GM12878 (cell line): ENCODE measurements at regions of chr6 and their contacts with region 1.

Region 1: DNA sequence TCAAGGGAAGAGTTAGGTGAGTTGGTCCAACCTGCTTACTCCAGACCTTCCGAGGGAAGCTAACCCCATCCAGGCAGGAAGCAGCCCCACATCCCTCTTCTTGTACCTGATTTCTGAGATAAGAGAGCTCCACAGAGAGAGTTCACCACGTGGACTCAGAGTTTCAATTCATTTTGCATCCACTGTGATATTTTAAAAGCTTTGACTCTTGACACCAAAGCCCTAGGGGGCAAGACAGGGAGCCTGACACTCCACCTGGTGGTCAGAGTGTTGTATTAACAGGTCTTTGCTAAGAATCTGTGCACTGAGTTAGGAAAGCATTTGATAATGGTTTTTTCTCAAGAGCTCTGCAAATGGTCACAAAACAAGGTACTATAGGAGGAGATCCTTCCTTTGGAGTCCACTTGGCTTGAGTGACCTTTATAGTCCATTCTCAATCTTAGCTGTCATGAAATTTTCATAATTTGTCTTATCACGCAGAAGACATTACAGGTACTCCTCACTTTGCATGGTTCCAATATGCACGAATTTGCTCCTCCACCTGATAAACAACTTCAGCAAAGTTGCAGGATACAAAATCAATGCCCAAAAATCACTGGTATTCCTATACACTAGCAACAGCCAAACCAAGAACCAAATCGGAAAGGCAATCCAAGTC is 56.2 kb upstream of the RIPOR2 start:
- DNase-seq: peak; percentile 54
- ATAC-seq: peak; percentile 98
- H3K4me3 ChIP-seq: no peak overlapping the region
- H3K27ac ChIP-seq: no peak overlapping the region
- H3K4me1 ChIP-seq: peaks cover 6% of the 10 kb centered on the region
- H3K27me3 ChIP-seq: no peaks in the 10 kb centered on the region
- CTCF ChIP-seq: peak; percentile 77 to 81 (median 79)
- EP300 ChIP-seq: no peak
- POLR2A ChIP-seq: no peak
- RAD21 ChIP-seq: peak; percentile 99

Region 2: GRCh38 chr6:24855395-24856245 is 136.3 kb before region 1 on chr6:
- CTCF ChIA-PET with region 1: interaction called, 230 read pairs
- POLR2A ChIA-PET with region 1: interaction called, 7 read pairs
- RAD21 ChIA-PET with region 1: interaction called, 160 read pairs
- SMC1A ChIA-PET with region 1: interaction called, 243 read pairs
- in situ Hi-C with region 1: no loop called
- intact Hi-C with region 1: loop called (anchors 1 kb)
- DNase-seq: peak; percentile 58
- ATAC-seq: peak; percentile 85
- H3K4me3 ChIP-seq: no peak overlapping the region
- H3K27ac ChIP-seq: no peak overlapping the region
- H3K4me1 ChIP-seq: peaks cover 32% of the 10 kb centered on the region
- H3K27me3 ChIP-seq: no peaks in the 10 kb centered on the region
- CTCF ChIP-seq: peak; percentile 78 to 90 (median 87)
- EP300 ChIP-seq: no peak
- POLR2A ChIP-seq: no peak
- RAD21 ChIP-seq: peak; percentile 98

Region 3: DNA sequence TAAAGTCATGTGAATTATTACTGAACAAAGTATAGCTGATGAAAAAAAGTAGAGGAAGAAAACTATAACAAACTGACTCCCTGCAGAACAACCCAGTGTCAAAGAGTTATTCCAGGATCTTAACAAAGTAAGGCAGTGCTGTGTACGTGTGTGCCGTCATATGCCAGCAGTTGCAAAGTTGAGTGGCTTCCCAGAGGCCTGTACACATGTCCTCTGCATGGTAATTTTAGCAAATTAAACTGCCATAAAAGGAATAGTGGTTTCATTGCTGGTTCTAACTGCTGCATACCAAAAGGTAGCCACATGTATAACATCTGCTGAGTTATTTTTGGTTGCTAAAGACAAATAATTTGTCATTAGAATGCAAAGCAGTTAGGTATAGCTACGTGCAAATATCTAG is 100.9 kb before region 1 on chr6:
- CTCF ChIA-PET with region 1: interaction called, 21 read pairs
- POLR2A ChIA-PET with region 1: interaction called, 3 read pairs
- RAD21 ChIA-PET with region 1: interaction called, 16 read pairs
- SMC1A ChIA-PET with region 1: interaction called, 25 read pairs
- in situ Hi-C with region 1: no loop called
- intact Hi-C with region 1: no loop called
- DNase-seq: no peak
- ATAC-seq: no peak
- H3K4me3 ChIP-seq: no peak overlapping the region
- H3K27ac ChIP-seq: no peak overlapping the region
- H3K4me1 ChIP-seq: peaks cover 15% of the 10 kb centered on the region
- H3K27me3 ChIP-seq: no peaks in the 10 kb centered on the region
- CTCF ChIP-seq: no peak
- EP300 ChIP-seq: no peak
- POLR2A ChIP-seq: no peak
- RAD21 ChIP-seq: no peak

Region 4: DNA sequence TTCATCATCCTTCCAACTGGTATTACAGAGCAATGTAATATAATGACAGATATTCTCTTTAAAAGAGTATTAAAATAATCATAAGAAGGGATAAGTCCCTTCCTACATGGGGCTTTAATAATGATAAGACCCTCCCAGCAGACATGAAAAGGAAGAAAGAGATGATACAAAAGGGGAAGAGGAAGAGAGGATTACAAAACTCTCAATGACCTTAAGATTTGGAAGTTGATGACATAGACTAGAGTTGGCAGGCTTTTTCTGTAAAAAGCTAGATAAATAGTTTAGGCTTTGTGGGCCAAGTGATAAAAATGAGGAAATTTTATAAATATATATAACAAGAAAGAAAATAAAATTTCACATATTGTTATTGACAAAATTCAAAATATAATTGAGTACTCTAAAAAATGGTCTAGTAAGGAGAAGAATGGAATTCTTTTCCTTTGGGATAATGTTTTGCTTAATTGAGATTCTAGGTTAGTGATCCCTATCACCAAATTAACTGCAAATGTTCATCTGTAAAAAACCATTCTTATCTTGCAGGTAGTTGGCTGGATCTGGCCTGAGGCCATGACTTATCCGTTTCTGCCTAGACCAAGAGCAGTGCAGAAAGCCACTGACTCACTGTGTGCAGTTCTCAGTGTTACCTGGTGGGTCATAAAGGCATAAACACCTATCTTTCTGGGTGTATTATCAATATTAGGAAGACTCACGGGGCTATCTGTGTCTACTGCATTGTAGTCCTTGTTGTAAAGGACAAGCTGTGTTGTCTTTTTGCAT is 67.2 kb before region 1 on chr6:
- CTCF ChIA-PET with region 1: interaction called, 376 read pairs
- POLR2A ChIA-PET with region 1: no interaction called
- RAD21 ChIA-PET with region 1: interaction called, 24 read pairs
- SMC1A ChIA-PET with region 1: interaction called, 42 read pairs
- in situ Hi-C with region 1: no loop called
- intact Hi-C with region 1: no loop called
- DNase-seq: no peak
- ATAC-seq: 0 out of 3 replicates have a peak, but pooled peaks have one; percentile 9
- H3K4me3 ChIP-seq: no peak overlapping the region
- H3K27ac ChIP-seq: no peak overlapping the region
- H3K4me1 ChIP-seq: peaks cover 42% of the 10 kb centered on the region
- H3K27me3 ChIP-seq: no peaks in the 10 kb centered on the region
- CTCF ChIP-seq: no peak
- EP300 ChIP-seq: no peak
- POLR2A ChIP-seq: no peak
- RAD21 ChIP-seq: no peak

Region 5: GRCh38 chr6:24968786-24969185 is 23.2 kb before region 1 on chr6:
- CTCF ChIA-PET with region 1: interaction called, 31 read pairs
- POLR2A ChIA-PET with region 1: no interaction called
- RAD21 ChIA-PET with region 1: interaction called, 30 read pairs
- SMC1A ChIA-PET with region 1: interaction called, 21 read pairs
- in situ Hi-C with region 1: no loop called
- intact Hi-C with region 1: no loop called
- DNase-seq: no peak
- ATAC-seq: no peak
- H3K4me3 ChIP-seq: no peak overlapping the region
- H3K27ac ChIP-seq: no peak overlapping the region
- H3K4me1 ChIP-seq: peaks cover under 1% of the 10 kb centered on the region; the same call in 1 of the 2 replicates
- H3K27me3 ChIP-seq: no peaks in the 10 kb centered on the region
- CTCF ChIP-seq: no peak
- EP300 ChIP-seq: no peak
- POLR2A ChIP-seq: no peak
- RAD21 ChIP-seq: no peak

Region 6: GRCh38 chr6:25017932-25018567 is 26.1 kb after region 1 on chr6:
- CTCF ChIA-PET with region 1: interaction called, 153 read pairs
- POLR2A ChIA-PET with region 1: interaction called, 7 read pairs
- RAD21 ChIA-PET with region 1: interaction called, 47 read pairs
- SMC1A ChIA-PET with region 1: interaction called, 144 read pairs
- in situ Hi-C with region 1: no loop called
- intact Hi-C with region 1: no loop called
- DNase-seq: no peak
- ATAC-seq: peak; percentile 89
- H3K4me3 ChIP-seq: no peak overlapping the region
- H3K27ac ChIP-seq: no peak overlapping the region
- H3K4me1 ChIP-seq: peaks cover 5% of the 10 kb centered on the region
- H3K27me3 ChIP-seq: no peaks in the 10 kb centered on the region
- CTCF ChIP-seq: peak; percentile 76 to 90 (median 82)
- EP300 ChIP-seq: no peak
- POLR2A ChIP-seq: no peak
- RAD21 ChIP-seq: peak; percentile 99

Region 7: GRCh38 chr6:25053875-25054371 is 62.0 kb after region 1 on chr6:
- CTCF ChIA-PET with region 1: interaction called, 8 read pairs
- POLR2A ChIA-PET with region 1: no interaction called
- RAD21 ChIA-PET with region 1: interaction called, 4 read pairs
- SMC1A ChIA-PET with region 1: interaction called, 10 read pairs
- in situ Hi-C with region 1: no loop called
- intact Hi-C with region 1: no loop called
- DNase-seq: no peak
- ATAC-seq: peak; percentile 93
- H3K4me3 ChIP-seq: no peak overlapping the region
- H3K27ac ChIP-seq: peak overlapping the region; percentile 41
- H3K4me1 ChIP-seq: peaks cover 26% of the 10 kb centered on the region
- H3K27me3 ChIP-seq: no peaks in the 10 kb centered on the region
- CTCF ChIP-seq: peak in 2 of 3 experiments; percentile 16 to 20; a peak in 2 of 6 replicates
- EP300 ChIP-seq: peak in 1 of 2 experiments; percentile 29; a peak in 1 of 4 replicates
- POLR2A ChIP-seq: no peak
- RAD21 ChIP-seq: peak; percentile 21; the same call in 1 of the 2 replicates